ENCODE measurements at regions of chr17 and their contacts with region 1.

Region 1: DNA sequence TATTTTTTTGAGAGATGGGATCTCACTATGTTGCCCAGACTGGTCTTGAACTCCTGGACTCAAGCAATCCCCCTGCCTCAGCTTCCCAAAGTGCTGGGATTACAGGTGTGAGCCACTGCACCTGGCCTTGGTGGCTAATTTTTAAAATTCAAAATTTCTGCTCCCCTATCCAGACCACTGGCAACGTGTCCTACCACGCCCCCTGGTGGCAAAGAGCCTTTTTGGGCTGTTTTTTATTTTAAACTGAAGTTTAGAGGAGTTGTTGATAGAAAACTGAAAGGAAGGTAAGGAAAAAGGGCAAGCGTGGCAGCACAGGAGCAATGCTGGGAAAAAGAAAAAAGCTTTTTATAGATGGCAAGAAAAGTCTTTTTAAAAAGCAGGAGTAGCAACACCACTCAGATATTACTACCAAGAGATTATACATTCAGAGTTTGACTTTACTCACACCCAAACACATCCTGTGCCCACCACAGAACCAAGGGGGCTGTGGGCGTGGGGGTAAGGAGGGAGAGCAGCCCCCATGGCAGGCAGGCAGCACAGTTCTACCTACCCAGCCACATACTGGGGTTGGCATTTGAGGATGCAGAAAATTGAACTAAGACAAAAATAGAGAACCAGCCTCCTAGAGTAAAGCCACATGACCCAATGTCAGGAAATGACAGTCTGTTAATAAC is 4.2 kb upstream of the MXRA7 start:
- DNase-seq: no peak

Region 2: DNA sequence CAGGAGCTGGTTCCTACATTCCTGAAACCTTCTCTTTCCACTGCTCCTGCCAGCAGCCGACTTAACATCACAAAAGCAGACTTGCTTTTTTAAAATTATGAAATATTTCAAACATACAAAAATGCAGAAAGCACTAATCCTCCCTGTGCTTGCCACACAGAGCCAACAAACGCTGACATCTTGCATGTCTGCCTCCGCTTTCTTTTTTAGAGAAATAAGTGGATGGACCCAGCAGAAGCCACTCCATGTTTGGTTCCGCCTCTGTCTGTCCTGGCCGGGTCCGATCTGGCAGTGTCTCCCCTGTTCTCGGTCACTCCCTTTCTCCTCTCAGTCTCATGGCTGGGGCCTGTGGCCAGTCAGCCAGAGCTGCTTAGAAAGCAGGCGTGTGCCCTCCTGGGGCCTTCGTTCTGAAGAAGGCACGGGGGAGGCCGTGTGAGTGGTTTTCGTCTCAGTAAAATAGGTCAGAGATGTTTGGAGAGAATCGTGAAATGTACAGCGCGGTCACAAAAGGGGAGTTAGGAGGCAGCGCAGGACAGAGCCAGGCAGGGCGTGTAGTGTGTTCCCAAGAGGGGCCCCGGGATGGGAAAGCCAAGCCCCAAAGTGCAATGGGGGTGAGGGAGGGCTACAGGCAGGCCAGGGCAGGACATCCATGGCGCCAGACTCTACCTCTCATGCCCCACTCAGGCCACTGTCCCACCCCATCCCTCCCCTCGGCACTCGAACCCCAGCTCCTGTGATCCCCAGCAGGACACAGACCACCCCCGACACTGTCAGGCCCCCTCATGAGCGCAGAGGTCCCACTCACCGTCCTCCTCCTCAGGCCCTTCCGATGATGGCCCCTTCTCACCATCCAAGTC is 27.4 kb before region 1 on chr17:
- CTCF ChIA-PET with region 1: interaction called, 7 read pairs
- POLR2A ChIA-PET with region 1: interaction called, 19 read pairs
- DNase-seq: no peak

Region 3: DNA sequence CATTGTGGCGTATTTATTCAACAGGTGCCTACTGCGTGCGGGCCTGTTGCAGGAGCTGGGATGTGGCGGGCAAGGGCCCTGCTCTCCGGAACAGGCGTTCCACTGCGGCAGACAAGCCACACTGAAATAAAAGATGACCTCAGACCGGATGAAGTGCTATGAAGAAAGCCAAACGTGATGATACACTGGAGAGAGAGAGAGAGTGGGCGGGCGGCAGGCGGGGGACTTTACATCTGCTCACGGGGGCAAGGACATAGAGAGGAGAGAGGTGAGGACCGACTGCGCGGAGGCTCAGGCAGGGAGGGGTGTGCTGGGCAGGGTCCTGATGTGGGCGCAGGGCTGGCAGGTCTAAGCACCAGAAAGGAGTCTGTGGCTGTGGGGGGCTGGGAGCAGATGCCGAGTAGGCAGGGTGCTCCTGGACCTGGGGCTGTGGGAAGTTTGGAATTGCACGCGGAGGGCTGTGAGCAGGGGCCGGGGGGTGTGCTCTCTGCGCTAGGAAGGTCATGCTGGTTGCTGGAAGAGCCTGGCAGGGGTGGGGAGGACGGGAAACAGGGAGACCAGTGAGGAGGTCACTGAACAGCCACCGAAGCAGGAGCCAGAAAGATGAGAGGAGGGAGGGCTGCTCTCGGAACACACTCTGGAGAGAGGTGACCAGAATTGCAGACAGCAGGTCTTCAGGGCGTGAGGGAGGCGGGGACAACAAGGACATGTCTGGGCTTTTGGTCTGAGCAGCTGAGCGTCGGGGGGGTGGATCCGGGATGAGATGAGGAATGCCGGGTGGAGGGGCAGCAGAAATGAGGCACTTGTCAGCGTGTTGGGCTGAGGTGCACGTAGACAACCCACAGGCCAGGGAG is 14.1 kb before region 1 on chr17:
- CTCF ChIA-PET with region 1: interaction called, 7 read pairs
- POLR2A ChIA-PET with region 1: interaction called, 38 read pairs
- DNase-seq: no peak

Region 4: DNA sequence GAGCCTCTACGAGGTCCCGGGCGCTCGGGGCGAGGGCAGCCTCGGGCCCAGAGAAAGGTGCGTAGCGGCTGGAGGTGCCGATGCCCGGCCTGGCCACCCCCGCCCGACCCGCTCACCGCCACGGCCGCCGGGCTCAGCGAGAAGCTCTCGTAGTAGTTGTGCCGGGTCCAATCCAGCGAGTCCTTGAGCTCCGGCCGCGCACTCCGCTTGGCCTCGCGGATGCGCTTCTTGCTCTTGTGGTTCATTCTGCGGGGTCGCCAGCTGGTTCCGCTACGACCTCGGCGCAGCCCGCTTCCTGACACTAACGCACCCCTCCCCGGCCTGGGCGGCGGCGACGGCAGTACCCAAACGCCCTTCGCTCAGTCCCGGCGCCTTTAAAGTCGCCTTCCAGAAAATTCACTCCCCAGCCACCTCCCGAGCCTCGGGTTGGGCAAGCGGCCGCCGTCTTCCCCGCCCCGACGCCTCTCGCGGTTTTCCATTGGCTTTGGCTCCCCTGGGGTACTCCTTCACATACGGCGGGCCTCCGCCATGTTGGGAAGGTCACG is 11.3 kb after region 1 on chr17 and contains the start of gene JMJD6:
- CTCF ChIA-PET with region 1: interaction called, 7 read pairs
- POLR2A ChIA-PET with region 1: interaction called, 18 read pairs
- DNase-seq: peak; percentile 89

Region 5: DNA sequence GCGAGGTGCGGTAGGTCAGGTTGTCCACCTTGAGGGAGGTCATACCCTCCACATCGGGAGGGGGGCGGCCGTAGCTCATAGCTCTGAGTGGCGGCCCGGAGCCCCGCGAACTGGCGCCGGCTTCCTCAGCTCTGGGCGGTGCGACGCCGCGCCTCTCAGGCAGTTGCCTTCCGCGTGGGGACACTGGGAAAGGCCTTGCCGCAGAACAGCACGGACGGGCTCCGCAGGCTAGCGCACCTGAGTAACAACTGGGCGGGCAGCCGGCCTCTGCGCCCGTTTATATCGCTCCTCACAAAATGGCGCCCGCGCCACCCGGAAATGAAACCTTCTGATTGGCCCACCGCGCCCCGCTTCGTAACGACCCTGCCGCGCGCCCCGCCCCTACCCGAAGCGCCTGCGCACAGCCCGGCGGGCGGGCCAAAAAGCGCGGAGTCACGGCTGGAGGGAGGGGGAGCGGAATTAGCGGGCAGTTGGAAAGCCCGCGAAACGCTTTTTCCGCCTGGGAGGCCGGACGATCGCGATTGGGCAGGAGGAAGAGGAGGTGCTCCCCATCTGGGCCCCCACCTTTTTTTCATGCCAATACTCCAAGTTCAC is 22.2 kb after region 1 on chr17 and contains the start of gene SRSF2:
- CTCF ChIA-PET with region 1: interaction called, 3 read pairs
- POLR2A ChIA-PET with region 1: interaction called, 29 read pairs
- DNase-seq: peak; percentile 96

Measured in HEK293T (cell line).